Natural killer cell (primary cell): ENCODE measurements at regions of chr3 and their contacts with region 1.

Region 1: DNA sequence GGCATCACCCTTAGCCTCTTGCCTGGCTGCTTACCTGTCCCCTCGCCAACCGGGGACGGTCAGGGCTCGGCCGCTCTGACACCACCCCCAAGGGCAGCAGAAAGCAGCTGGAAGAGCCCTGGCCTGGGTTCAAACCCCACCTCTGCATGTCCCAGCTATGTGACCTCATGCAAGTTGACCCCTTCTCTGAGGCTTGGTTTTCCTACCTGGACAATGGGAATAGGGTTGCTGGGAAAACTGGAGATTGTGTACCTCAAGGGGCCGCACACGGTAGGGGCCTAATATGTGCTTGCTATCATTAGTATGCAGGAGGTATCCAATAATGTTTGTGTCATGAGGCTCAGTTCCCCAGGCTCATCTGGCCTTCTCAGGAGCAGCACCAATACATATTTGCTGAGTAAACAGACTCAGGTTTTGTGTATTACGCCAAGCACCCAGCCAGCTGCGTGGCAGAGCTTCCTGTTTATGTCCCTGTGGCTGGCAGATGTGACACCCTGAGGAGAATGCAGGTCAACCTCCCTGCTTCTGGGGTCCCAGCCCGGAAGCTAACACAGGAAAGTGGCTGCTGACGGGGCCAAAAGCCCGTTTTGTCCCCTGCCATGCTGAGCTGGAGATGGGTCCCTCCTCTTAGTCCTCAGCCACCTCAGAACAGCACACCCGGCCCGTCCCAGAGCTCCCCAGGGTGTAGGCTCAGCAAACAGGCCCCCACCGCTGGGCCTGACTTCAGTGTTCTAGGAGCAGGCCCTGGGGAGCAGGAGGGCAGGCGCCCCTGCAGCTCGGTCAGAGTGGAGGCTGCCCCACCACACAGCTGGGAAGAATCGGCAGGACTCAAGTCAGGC is 29.7 kb downstream of the PLXND1 start:
- DNase-seq: peak; percentile 68 to 89
- ATAC-seq: peak; percentile 83 to 90 (median 85)
- H3K4me3 ChIP-seq: no peak overlapping the region
- H3K4me3 Mint-ChIP-seq: peak overlapping the region; percentile 62
- H3K27ac ChIP-seq: peak overlapping the region; percentile 86
- H3K27ac Mint-ChIP-seq: peak overlapping the region; percentile 89 to 90
- H3K4me1 ChIP-seq: peaks cover 66% of the 10 kb centered on the region
- H3K4me1 Mint-ChIP-seq: peaks cover 50 to 69% of the 10 kb centered on the region in 2 donors
- H3K27me3 ChIP-seq: no peaks in the 10 kb centered on the region
- H3K27me3 Mint-ChIP-seq: no peaks in the 10 kb centered on the region
- CTCF ChIP-seq: no peak

Region 2: GRCh38 chr3:129593595-129594339 is 17.0 kb after region 1 on chr3:
- intact Hi-C with region 1: loop called (anchors 2 kb)
- DNase-seq: peak; percentile 68 to 79
- ATAC-seq: peak; percentile 68 to 79 (median 71)
- H3K4me3 ChIP-seq: no peak overlapping the region
- H3K4me3 Mint-ChIP-seq: peak overlapping the region; percentile 89
- H3K27ac ChIP-seq: peak overlapping the region; percentile 34
- H3K27ac Mint-ChIP-seq: peak overlapping the region; percentile 92 to 93
- H3K4me1 ChIP-seq: peaks cover 88% of the 10 kb centered on the region
- H3K4me1 Mint-ChIP-seq: peaks cover 45 to 72% of the 10 kb centered on the region in 2 donors
- H3K27me3 ChIP-seq: no peaks in the 10 kb centered on the region
- H3K27me3 Mint-ChIP-seq: no peaks in the 10 kb centered on the region
- CTCF ChIP-seq: no peak

Region 3: DNA sequence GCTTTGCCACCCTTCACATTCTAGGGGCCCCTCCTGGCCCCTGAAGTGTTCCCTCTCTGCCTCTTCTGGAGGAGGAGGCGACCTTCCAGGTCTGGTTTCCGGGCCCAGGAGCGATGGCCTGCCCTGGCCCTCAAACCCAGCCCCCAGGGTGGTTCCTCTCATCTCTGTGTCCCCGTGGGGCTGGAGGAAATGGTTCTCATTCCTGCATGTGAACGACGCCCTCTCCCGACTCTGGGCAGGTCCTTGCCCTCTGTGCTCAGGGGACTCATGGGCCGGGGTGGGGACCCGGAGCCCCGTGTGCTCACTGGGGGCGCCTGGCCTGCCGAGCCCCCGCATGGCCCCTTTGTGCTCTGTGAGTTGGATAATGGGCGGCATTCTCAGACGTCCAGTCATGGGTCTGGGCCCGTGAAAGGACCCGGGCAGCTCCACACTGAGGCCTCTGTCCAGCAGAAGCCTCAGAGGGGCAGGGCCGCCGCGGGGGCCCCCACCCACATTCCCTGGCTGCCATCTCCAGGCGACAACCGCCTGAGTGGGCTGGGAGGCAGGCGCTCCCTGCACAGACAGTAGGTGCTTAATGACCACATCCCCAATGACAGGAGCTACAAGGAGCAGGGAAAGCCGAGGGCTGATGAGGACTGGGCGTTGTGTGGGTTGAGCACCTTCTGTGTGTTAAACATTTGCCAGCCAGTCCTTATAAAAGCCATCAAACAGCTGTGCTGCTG is 35.2 kb after region 1 on chr3:
- intact Hi-C with region 1: loop called (anchors 5 kb)
- DNase-seq: no peak
- ATAC-seq: no peak
- H3K4me3 ChIP-seq: no peak overlapping the region
- H3K4me3 Mint-ChIP-seq: no peak overlapping the region
- H3K27ac ChIP-seq: no peak overlapping the region
- H3K27ac Mint-ChIP-seq: peak overlapping the region in 1 of 2 donors; percentile 83
- H3K4me1 ChIP-seq: peaks cover 37% of the 10 kb centered on the region
- H3K4me1 Mint-ChIP-seq: peaks cover 42 to 52% of the 10 kb centered on the region in 2 donors
- H3K27me3 ChIP-seq: no peaks in the 10 kb centered on the region
- H3K27me3 Mint-ChIP-seq: peaks cover 0 to 11% of the 10 kb centered on the region in 2 donors
- CTCF ChIP-seq: no peak

Region 4: DNA sequence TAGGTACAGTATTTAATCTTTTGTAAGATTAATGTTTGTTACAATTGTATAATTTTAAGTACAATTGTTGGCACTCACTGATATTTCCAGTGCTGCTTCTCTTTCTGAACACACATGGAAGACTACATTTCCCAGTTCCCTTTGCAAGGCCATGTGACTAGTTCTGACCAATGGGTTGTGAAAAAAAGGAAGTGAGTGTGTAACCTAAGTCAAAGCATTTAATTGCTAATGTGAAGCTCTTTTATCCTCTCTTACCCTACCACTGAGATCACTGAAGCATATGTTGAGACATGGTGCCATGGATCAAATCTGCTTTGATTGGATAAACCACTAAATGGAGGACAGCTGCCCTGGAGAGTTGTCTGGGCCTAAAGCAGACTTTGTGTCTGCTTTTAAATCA is 113.7 kb after region 1 on chr3:
- intact Hi-C with region 1: no loop called
- DNase-seq: peak in 1 of 2 donors; percentile 78
- ATAC-seq: peak; percentile 81 to 98 (median 91)
- H3K4me3 ChIP-seq: no peak overlapping the region
- H3K4me3 Mint-ChIP-seq: no peak overlapping the region
- H3K27ac ChIP-seq: no peak overlapping the region
- H3K27ac Mint-ChIP-seq: peak overlapping the region in 1 of 2 donors; percentile 19
- H3K4me1 ChIP-seq: no peaks in the 10 kb centered on the region
- H3K4me1 Mint-ChIP-seq: peaks cover 6 to 11% of the 10 kb centered on the region in 2 donors
- H3K27me3 ChIP-seq: no peaks in the 10 kb centered on the region
- H3K27me3 Mint-ChIP-seq: no peaks in the 10 kb centered on the region
- CTCF ChIP-seq: no peak